Aorta (tissue), 5 donors: ENCODE measurements at regions of chr10 and their contacts with region 1.

Region 1: GRCh38 chr10:116765547-116766162 is 23.3 kb upstream of the HSPA12A start:
- DNase-seq: no peak
- ATAC-seq: no peak
- H3K4me3 ChIP-seq: no peak overlapping the region
- H3K27ac ChIP-seq: no peak overlapping the region
- H3K4me1 ChIP-seq: no peaks in the 10 kb centered on the region
- H3K27me3 ChIP-seq: no peaks in the 10 kb centered on the region

Region 2: DNA sequence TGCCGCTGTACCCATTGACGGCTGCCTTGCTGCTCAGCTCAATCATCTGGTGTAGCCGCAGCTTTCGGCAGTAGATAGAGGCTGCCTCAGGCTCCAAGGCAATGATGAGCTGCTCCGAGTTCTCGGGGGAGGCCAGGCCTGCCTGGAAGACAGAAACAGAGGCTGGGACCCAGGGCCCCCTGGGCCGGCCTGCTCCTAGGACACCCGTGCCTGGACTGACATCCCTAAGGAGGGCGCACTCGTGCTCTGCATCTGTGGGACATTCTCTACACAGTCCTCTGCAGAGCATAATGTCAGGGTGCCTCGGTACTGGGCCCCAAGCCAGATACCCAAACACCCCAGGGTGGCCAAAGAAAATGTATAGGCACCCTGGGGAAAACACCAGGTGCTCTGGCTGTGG is 81.8 kb before region 1 on chr10:
- intact Hi-C with region 1: loop called in 1 of 2 experiments (anchors 5 kb)
- DNase-seq: no peak
- ATAC-seq: no peak
- H3K4me3 ChIP-seq: no peak overlapping the region
- H3K27ac ChIP-seq: no peak overlapping the region
- H3K4me1 ChIP-seq: no peaks in the 10 kb centered on the region
- H3K27me3 ChIP-seq: no peaks in the 10 kb centered on the region